GM12878 (cell line): ENCODE measurements at regions of chr3 and their contacts with region 1.

Region 1: GRCh38 chr3:4978204-4978965 is 852 bp upstream of the BHLHE40 start:
- DNase-seq: peak; percentile 78
- ATAC-seq: peak; percentile 52
- H3K4me3 ChIP-seq: peak overlapping the region; percentile 72
- H3K27ac ChIP-seq: peak overlapping the region; percentile 84
- H3K4me1 ChIP-seq: peaks cover 27% of the 10 kb centered on the region
- H3K27me3 ChIP-seq: no peaks in the 10 kb centered on the region
- CTCF ChIP-seq: no peak
- EP300 ChIP-seq: peak; percentile 60 to 80; a peak in 3 of 4 replicates
- POLR2A ChIP-seq: peak; percentile 89
- RAD21 ChIP-seq: 0 out of 2 replicates have a peak, but pooled peaks have one; percentile 5

Region 2: DNA sequence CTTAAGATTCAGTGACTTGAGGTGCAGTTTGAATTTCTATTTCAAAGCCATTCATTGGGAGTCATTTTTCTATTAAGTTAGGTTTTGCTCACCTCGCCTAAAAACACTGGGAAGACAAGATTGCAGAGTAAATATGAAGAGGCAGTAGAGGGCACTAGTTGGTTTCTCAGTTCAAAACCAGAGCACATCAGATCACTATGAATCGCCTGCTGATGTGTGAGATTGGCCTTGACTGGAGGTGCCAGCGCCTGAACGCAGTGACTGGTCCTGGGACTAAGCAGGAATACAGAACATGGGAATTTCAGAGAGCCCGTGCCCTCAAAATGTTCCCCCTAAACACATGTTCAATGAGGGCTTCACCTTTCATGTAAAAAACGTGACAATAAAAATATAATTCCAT is 256.3 kb before region 1 on chr3:
- CTCF ChIA-PET with region 1: interaction called, 81 read pairs
- POLR2A ChIA-PET with region 1: interaction called, 4 read pairs
- RAD21 ChIA-PET with region 1: interaction called, 77 read pairs
- SMC1A ChIA-PET with region 1: interaction called, 55 read pairs
- in situ Hi-C with region 1: loop called (anchors 5 kb)
- intact Hi-C with region 1: no loop called
- DNase-seq: no peak
- ATAC-seq: peak; percentile 87
- H3K4me3 ChIP-seq: no peak overlapping the region
- H3K27ac ChIP-seq: no peak overlapping the region
- H3K4me1 ChIP-seq: no peaks in the 10 kb centered on the region
- H3K27me3 ChIP-seq: no peaks in the 10 kb centered on the region
- CTCF ChIP-seq: peak; percentile 30 to 56 (median 47); a peak in 5 of 6 replicates
- EP300 ChIP-seq: no peak
- POLR2A ChIP-seq: no peak
- RAD21 ChIP-seq: peak; percentile 85

Region 3: GRCh38 chr3:4765212-4765611 is 213.2 kb before region 1 on chr3:
- CTCF ChIA-PET with region 1: interaction called, 9 read pairs
- POLR2A ChIA-PET with region 1: interaction called, 230 read pairs
- RAD21 ChIA-PET with region 1: interaction called, 342 read pairs
- SMC1A ChIA-PET with region 1: interaction called, 122 read pairs
- in situ Hi-C with region 1: no loop called
- intact Hi-C with region 1: no loop called
- DNase-seq: no peak
- ATAC-seq: no peak
- H3K4me3 ChIP-seq: no peak overlapping the region
- H3K27ac ChIP-seq: no peak overlapping the region
- H3K4me1 ChIP-seq: no peaks in the 10 kb centered on the region
- H3K27me3 ChIP-seq: no peaks in the 10 kb centered on the region
- CTCF ChIP-seq: no peak
- EP300 ChIP-seq: no peak
- POLR2A ChIP-seq: no peak
- RAD21 ChIP-seq: no peak

Region 4: GRCh38 chr3:4845882-4846281 is 132.5 kb before region 1 on chr3:
- CTCF ChIA-PET with region 1: interaction called, 78 read pairs
- POLR2A ChIA-PET with region 1: interaction called, 39 read pairs
- RAD21 ChIA-PET with region 1: interaction called, 151 read pairs
- SMC1A ChIA-PET with region 1: interaction called, 167 read pairs
- in situ Hi-C with region 1: loop called (anchors 5 kb)
- intact Hi-C with region 1: loop called (anchors 1 kb)
- DNase-seq: peak; percentile 89
- ATAC-seq: peak; percentile 75
- H3K4me3 ChIP-seq: no peak overlapping the region
- H3K27ac ChIP-seq: peak overlapping the region; percentile 74
- H3K4me1 ChIP-seq: peaks cover 45% of the 10 kb centered on the region
- H3K27me3 ChIP-seq: no peaks in the 10 kb centered on the region
- CTCF ChIP-seq: no peak
- EP300 ChIP-seq: peak; percentile 98 to 99
- POLR2A ChIP-seq: no peak
- RAD21 ChIP-seq: no peak

Region 5: DNA sequence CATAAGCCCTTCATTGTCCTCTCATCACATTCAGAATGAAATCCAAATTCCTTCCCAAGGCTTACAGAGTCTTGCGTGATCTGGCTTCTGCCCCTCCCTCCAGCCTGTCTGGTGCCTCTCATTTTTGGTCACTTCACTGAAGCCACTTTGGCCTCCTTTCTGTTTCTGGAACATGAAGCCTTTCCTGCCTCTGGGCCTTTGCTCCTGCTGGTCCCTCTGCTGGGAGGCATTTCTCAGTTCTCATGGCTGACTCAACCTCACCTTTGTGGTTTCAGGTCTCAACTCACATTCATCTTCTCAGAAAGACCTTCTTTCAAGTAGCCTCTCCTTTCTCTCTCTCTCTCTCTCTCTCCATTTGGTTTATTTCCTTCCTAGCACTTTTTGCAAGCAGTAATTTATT is 43.0 kb before region 1 on chr3:
- CTCF ChIA-PET with region 1: interaction called, 7 read pairs
- POLR2A ChIA-PET with region 1: interaction called, 3 read pairs
- RAD21 ChIA-PET with region 1: interaction called, 6 read pairs
- SMC1A ChIA-PET with region 1: interaction called, 15 read pairs
- in situ Hi-C with region 1: no loop called
- intact Hi-C with region 1: loop called (anchors 1 kb)
- DNase-seq: no peak
- ATAC-seq: peak; percentile 80
- H3K4me3 ChIP-seq: no peak overlapping the region
- H3K27ac ChIP-seq: no peak overlapping the region
- H3K4me1 ChIP-seq: peaks cover 14% of the 10 kb centered on the region; the same call in 1 of the 2 replicates
- H3K27me3 ChIP-seq: no peaks in the 10 kb centered on the region
- CTCF ChIP-seq: no peak
- EP300 ChIP-seq: no peak
- POLR2A ChIP-seq: no peak
- RAD21 ChIP-seq: 0 out of 2 replicates have a peak, but pooled peaks have one; percentile 14

Region 6: GRCh38 chr3:5057857-5058324 is 79.5 kb after region 1 on chr3:
- CTCF ChIA-PET with region 1: interaction called, 28 read pairs
- POLR2A ChIA-PET with region 1: interaction called, 20 read pairs
- RAD21 ChIA-PET with region 1: interaction called, 231 read pairs
- SMC1A ChIA-PET with region 1: interaction called, 165 read pairs
- in situ Hi-C with region 1: no loop called
- intact Hi-C with region 1: no loop called
- DNase-seq: peak; percentile 75
- ATAC-seq: peak; percentile 93
- H3K4me3 ChIP-seq: no peak overlapping the region
- H3K27ac ChIP-seq: no peak overlapping the region
- H3K4me1 ChIP-seq: peaks cover 34% of the 10 kb centered on the region
- H3K27me3 ChIP-seq: no peaks in the 10 kb centered on the region; a peak in 1 of 4 replicates
- CTCF ChIP-seq: peak; percentile 70 to 87 (median 76)
- EP300 ChIP-seq: no peak
- POLR2A ChIP-seq: no peak
- RAD21 ChIP-seq: peak; percentile 99